Dorsolateral prefrontal cortex (tissue), 120 donors: ENCODE measurements at regions of chr2 and their contacts with region 1.

Region 1: DNA sequence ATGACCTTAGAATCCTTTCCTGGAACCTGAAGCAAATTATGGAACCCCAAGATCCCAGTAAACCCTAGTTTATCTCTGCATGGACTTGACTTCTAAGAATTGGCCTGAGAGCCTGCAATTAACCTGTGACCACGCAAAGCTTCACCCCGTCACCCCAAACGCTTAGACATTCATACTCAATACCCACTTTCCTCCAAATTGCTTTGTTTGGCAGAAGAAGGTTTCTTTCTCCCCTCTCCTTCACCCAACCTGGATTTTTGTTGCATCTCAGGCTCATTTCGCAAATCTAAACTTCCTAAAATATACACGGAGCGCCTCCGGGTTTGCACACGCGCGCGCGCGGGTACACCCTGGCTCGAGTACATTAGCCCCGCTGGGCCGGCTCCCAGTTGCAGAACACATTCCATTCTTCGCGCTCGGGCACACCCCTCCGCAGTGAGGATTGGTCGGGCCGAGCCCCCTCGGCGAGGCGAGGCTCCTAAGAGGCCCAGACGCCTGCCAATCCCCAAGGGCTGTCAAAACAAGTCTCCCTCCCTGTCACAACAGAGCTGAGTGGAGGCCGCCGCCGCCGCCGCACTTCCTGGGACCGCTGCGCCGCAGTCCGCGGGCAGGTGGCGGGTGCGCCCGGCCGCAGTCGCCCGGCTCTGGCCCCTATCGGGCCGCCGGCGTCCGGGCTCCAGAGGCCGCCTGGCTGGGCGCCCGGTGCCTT is at the start of gene PLCL1:
- DNase-seq: peak; percentile 78 to 98 (median 98)
- H3K4me3 ChIP-seq: peak within 1 kb of the TSS; percentile 66 to 98 (median 84)
- H3K27ac ChIP-seq: peak within 1 kb of the TSS; percentile 23 to 93 (median 87)
- H3K27me3 ChIP-seq: no peaks in the 10 kb centered on the region
- CTCF ChIP-seq: peak in 35 of 56 donors; percentile 5 to 56 (median 30)
- total RNA-seq, gene PLCL1: 25.2 to 120 (median 49.4) TPM

Region 2: DNA sequence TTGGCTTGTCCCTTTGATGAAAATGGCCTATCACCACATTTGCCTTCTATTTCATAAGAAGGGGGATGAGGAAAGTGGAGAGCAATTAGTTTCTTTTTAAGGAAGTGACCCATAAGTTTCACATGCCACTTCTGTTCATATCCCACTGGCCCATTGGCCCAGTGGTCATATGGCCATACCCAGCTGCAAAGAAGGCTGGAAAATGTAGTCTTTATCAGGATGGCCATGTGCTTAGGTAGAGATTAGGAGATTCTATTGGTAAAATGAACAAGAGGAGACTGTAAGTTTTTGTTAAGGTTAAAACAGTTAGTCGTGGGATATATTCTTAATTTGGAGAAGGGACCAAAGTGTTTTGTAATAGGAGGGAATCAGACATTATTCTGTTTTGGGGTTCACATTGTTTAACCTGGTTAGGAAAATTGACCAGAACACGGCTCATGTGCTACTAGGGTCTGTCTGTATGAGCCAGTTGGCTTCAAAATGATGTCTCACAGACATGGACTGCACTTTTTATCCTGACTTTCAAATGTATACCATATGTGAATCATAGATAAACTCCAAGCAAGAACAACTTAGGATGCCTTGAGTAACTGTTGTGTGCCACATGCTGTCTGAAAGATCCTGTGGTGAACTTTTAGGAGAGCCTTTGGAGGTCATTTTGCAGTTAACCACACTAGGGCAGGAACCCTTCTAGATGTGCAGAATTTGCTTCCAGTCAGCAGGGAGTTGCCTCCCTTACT is 17.5 kb after region 1 on chr2:
- intact Hi-C with region 1: no loop called
- DNase-seq: no peak
- H3K4me3 ChIP-seq: no peak overlapping the region
- H3K27ac ChIP-seq: peak overlapping the region in 1 of 59 donors; percentile 8
- H3K27me3 ChIP-seq: no peaks in the 10 kb centered on the region
- CTCF ChIP-seq: no peak

Region 3: DNA sequence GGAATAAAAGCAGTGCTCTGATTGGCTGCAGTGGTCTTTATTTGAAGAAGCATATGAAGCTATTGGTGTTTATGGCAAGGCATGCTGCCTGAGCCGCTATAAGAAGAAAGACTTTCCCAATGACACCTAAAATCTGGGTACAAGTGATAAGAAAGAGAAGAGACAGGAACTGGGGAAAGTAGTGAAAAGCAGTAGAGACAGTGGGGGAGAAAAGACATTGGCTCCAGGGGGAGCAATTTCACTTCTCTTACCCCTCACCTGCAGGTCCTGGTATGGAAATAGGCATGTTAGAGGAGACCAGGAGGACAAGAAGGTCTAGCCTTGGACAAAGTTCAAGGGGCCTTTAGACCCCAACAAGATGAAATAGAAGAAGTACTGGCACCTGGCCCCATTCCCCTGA is 47.2 kb after region 1 on chr2:
- intact Hi-C with region 1: loop called in 1 of 2 experiments (anchors 5 kb)
- DNase-seq: no peak
- H3K4me3 ChIP-seq: peak overlapping the region in 4 of 59 donors; percentile 14 to 41 (median 24)
- H3K27ac ChIP-seq: peak overlapping the region in 58 of 59 donors; percentile 38 to 95 (median 89)
- H3K27me3 ChIP-seq: no peaks in the 10 kb centered on the region
- CTCF ChIP-seq: peak in 11 of 56 donors; percentile 3 to 34 (median 12)

Region 4: GRCh38 chr2:197893403-197894177 is 89.4 kb after region 1 on chr2:
- intact Hi-C with region 1: loop called in 1 of 2 experiments (anchors 10 kb)
- DNase-seq: no peak
- H3K4me3 ChIP-seq: peak overlapping the region in 10 of 59 donors; percentile 0 to 21 (median 9)
- H3K27ac ChIP-seq: peak overlapping the region in 23 of 59 donors; percentile 5 to 63 (median 26)
- H3K27me3 ChIP-seq: no peaks in the 10 kb centered on the region
- CTCF ChIP-seq: no peak

Region 5: GRCh38 chr2:198053776-198054698 is 249.8 kb after region 1 on chr2:
- intact Hi-C with region 1: loop called (anchors 1 to 10 kb)
- DNase-seq: peak in 2 of 10 donors; percentile 50 to 51
- H3K4me3 ChIP-seq: no peak overlapping the region
- H3K27ac ChIP-seq: peak overlapping the region in 55 of 59 donors; percentile 6 to 83 (median 61)
- H3K27me3 ChIP-seq: no peaks in the 10 kb centered on the region
- CTCF ChIP-seq: peak in 46 of 56 donors; percentile 11 to 67 (median 48)

Region 6: GRCh38 chr2:198073253-198073652 is 269.1 kb after region 1 on chr2:
- intact Hi-C with region 1: no loop called
- DNase-seq: no peak
- H3K4me3 ChIP-seq: no peak overlapping the region
- H3K27ac ChIP-seq: peak overlapping the region in 3 of 59 donors; percentile 8 to 24 (median 18)
- H3K27me3 ChIP-seq: no peaks in the 10 kb centered on the region
- CTCF ChIP-seq: no peak

Region 7: GRCh38 chr2:198296665-198297308 is 492.6 kb after region 1 on chr2:
- intact Hi-C with region 1: loop called (anchors 1 kb)
- DNase-seq: peak in 8 of 10 donors; percentile 37 to 76 (median 56)
- H3K4me3 ChIP-seq: peak overlapping the region in 8 of 59 donors; percentile 3 to 47 (median 18)
- H3K27ac ChIP-seq: no peak overlapping the region
- H3K27me3 ChIP-seq: no peaks in the 10 kb centered on the region
- CTCF ChIP-seq: peak; percentile 74 to 98 (median 91)

Region 8: GRCh38 chr2:198628596-198628995 is 824.4 kb after region 1 on chr2:
- intact Hi-C with region 1: no loop called
- DNase-seq: no peak
- H3K4me3 ChIP-seq: no peak overlapping the region
- H3K27ac ChIP-seq: no peak overlapping the region
- H3K27me3 ChIP-seq: peaks cover 0 to 4% (median 0%) of the 10 kb centered on the region in 45 donors
- CTCF ChIP-seq: no peak